Left cardiac atrium (tissue), 4 donors: ENCODE measurements at regions of chr19 and their contacts with region 1.

Region 1: GRCh38 chr19:4803736-4804695 is 12.5 kb downstream of the FEM1A start:
- DNase-seq: peak; percentile 67
- ATAC-seq: peak; percentile 69

Region 2: GRCh38 chr19:4732680-4733114 is 71.3 kb before region 1 on chr19:
- intact Hi-C with region 1: loop called (anchors 1 to 5 kb)
- DNase-seq: no peak
- ATAC-seq: peak; percentile 88 to 90

Region 3: DNA sequence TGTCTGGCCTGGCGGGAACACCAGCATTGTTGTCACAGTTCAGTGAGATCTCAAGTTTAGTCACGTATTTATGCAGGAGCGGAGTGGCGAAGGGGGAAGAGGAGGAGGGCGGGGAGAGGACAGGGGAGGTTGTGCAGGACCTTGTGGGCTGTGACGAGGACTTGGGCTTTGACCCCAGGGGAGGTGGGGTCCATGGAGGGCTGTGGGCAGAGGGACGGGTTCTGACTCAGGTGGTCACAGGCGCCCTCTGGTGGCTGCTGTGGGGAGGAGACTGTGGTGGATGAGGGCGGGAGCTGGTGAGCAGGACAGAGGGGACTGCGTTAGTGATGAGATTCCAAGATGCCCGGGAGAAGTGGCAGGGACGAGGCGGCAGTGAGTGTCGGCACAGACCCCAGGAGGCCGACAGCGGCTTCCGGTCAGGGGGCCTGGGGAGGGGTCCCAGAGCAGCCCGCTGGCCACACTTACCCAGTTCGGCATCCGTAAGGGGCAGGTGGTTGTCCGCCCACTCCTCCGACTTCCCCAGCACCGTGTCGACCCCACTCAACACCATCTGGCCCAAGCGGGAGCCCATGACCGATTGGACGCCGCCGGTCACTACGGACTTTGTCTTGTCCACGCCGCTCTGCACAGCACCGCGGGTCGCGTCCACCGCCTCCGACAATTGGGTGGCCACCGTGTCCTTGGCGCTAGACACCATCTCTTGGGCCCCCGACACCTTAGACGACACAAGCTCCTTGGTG is 47.7 kb after region 1 on chr19:
- intact Hi-C with region 1: loop called in 1 of 2 experiments (anchors 5 kb)
- DNase-seq: peak; percentile 75
- ATAC-seq: peak; percentile 82 to 83

Region 4: GRCh38 chr19:4867534-4868285 is 63.7 kb after region 1 on chr19 and contains the start of gene PLIN3:
- intact Hi-C with region 1: no loop called
- DNase-seq: peak; percentile 98
- ATAC-seq: peak; percentile 98
- total RNA-seq, gene PLIN3: 25.3 to 35.1 TPM

Region 5: DNA sequence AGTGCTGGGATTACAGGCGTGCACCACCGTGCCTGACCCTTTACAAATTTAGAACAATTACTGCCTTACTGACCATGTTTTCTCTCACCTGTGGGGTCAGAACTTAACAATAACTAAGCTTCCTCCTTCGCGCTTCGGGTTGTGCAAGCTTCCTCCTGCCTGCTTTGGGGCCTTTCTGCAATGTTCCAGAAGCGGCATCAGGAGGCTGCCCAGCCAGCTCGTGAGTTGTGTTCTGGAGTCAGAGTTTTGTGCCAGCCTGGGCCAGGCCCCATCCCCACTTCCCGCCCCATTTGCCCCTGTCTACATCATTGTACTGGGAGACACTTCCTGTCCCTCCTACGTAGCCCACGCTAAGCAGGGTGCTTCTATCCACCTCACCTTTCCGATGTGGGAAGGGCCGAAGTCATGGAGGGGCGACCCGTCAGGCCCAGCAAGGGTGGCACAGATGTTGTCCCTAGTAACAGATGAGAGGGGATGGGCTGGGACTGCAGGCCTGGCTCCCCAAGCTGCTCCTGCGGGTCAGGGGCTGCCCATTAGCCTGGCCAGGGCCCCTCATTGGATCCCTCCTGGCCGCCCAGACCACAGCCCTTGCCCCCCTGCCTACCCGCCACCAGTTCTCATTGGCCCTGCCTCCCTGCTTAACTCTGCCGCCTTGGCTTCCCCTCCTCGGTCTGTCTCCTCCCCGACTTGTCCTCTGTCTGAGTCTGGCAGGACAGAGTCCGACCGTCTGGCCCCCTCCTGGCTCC is 118.7 kb after region 1 on chr19:
- intact Hi-C with region 1: no loop called
- DNase-seq: no peak
- ATAC-seq: no peak